Heart left ventricle (tissue), 16 donors: ENCODE measurements at regions of chr2 and their contacts with region 1.

Region 1: GRCh38 chr2:45585267-45585861 is 25.7 kb downstream of the SRBD1 start:
- DNase-seq: no peak
- ATAC-seq: peak in 3 of 4 donors; percentile 58 to 70 (median 65)
- H3K4me3 ChIP-seq: peak overlapping the region in 1 of 12 donors; percentile 13
- H3K27ac ChIP-seq: no peak overlapping the region
- H3K4me1 ChIP-seq: peaks cover 0 to 23% (median 0%) of the 10 kb centered on the region in 12 donors
- H3K27me3 ChIP-seq: no peaks in the 10 kb centered on the region
- CTCF ChIP-seq: peak; percentile 43 to 76 (median 66)
- POLR2A ChIP-seq: no peak

Region 2: DNA sequence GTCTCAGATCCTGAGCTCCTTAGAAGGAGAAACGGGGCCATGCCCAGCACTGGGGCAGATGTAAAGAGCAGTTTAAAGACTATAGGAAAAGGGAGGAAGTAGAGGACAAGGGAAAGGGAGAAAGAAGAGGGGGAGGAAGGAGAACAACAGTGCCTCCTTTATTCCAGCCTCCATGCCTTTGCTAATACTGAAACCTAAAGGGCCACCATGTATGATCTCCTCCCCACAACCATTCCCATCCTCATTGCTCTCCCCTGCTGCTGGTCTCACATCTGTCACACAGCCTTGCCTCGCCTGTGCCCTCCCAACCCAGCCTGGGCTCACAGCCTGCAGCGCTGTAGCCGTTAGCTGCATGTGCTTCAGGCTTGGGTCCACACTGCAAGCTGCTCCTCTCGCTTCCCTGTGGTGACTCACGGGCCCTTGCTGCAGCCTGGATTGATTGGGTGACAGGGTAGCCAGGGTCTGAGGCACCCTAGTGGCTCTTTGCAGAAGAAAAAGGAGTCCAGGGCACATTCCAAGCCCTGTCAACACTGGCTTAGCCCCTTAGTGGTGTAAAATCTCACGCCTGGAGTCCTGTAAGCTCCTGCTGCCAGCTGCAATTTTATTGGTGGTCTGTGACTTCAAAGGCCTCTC is 256.2 kb before region 1 on chr2:
- intact Hi-C with region 1: no loop called
- DNase-seq: no peak
- ATAC-seq: no peak
- H3K4me3 ChIP-seq: no peak overlapping the region
- H3K27ac ChIP-seq: no peak overlapping the region
- H3K4me1 ChIP-seq: no peaks in the 10 kb centered on the region
- H3K27me3 ChIP-seq: no peaks in the 10 kb centered on the region
- CTCF ChIP-seq: no peak
- POLR2A ChIP-seq: no peak

Region 3: DNA sequence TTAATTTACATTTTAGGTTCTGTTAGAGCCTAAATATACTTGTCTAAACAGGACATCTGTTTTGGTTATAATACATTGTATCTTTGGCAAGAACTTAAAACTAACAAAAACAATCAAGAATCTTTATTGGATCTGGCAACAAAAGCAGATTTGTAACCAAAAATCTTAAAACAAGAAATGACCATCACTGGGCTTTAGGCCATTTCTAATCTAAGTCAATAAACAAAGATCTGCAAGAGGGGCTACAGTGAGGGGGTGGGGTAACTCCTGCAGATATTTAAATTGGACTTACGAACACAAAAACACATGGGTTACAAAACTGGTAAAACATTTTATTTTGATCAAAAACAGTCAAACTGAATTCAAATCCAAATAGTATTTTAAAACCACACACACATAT is 51.6 kb before region 1 on chr2:
- intact Hi-C with region 1: no loop called
- DNase-seq: no peak
- ATAC-seq: no peak
- H3K4me3 ChIP-seq: no peak overlapping the region
- H3K27ac ChIP-seq: no peak overlapping the region
- H3K4me1 ChIP-seq: no peaks in the 10 kb centered on the region
- H3K27me3 ChIP-seq: no peaks in the 10 kb centered on the region
- CTCF ChIP-seq: no peak
- POLR2A ChIP-seq: no peak

Region 4: GRCh38 chr2:45611020-45611737 is 25.8 kb after region 1 on chr2 and contains the start of gene SRBD1:
- intact Hi-C with region 1: loop called in 1 of 10 experiments (anchors 2 kb)
- DNase-seq: peak; percentile 92 to 98 (median 96)
- ATAC-seq: peak; percentile 97 to 98 (median 98)
- H3K4me3 ChIP-seq: peak within 1 kb of the TSS; percentile 64 to 89 (median 78)
- H3K27ac ChIP-seq: peak within 1 kb of the TSS; percentile 51 to 95 (median 90)
- H3K4me1 ChIP-seq: peaks cover 0 to 22% (median 13%) of the 10 kb centered on the region in 12 donors
- H3K27me3 ChIP-seq: no peaks in the 10 kb centered on the region
- CTCF ChIP-seq: peak in 2 of 12 donors; percentile 2 to 18
- POLR2A ChIP-seq: peak in 1 of 2 donors; percentile 66
- total RNA-seq, gene SRBD1: 4.6 to 16.9 (median 11.2) TPM

Region 5: GRCh38 chr2:45627911-45628310 is 42.5 kb after region 1 on chr2:
- intact Hi-C with region 1: no loop called
- DNase-seq: no peak
- ATAC-seq: no peak
- H3K4me3 ChIP-seq: no peak overlapping the region
- H3K27ac ChIP-seq: no peak overlapping the region
- H3K4me1 ChIP-seq: no peaks in the 10 kb centered on the region
- H3K27me3 ChIP-seq: peaks cover 0 to 11% (median 0%) of the 10 kb centered on the region in 9 donors
- CTCF ChIP-seq: no peak
- POLR2A ChIP-seq: no peak